ENCODE measurements at regions of chr19 and their contacts with region 1.

Region 1: DNA sequence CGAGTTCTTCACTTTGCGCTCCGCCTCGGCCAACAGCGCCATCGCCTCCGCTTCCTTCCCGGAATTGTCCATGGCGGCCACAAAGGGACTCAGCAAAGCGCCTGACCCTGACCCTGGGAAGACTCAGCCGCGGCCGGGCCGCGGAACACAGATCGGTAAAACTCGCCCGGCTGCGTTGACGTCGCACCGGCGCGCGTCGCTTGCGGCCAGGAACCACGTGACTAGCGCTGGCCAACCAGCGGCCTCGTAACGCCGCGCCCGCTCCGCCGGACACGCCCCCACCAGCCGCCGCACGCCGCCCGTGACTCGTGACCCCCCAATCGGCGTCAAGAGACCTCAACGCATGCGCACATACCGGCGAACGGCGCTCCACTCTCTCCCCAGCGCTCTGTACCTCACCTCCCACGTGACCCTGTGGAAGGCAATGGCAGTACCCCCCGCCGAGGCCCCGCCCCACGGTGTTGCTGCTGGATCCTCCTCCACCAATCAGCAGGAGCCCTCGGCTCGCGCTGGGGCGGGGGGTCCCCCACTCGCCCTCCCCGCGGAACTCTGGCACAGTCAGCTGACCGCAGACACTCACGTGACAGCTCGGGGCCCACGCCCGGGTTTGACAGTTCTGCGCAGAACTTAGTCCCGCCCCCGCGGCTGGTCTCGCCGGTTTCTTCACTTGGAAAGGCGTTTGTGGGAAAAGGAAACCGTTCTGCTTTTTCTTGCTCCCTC is at the start of gene NAPA:
- DNase-seq: peak; percentile 100
- H3K4me3 ChIP-seq: peak within 1 kb of the TSS; percentile 97 to 99 (median 98)
- H3K27ac ChIP-seq: peak within 1 kb of the TSS; percentile 98 to 100 (median 99)
- H3K4me1 ChIP-seq: peaks cover 0 to 52% (median 43%) of the 10 kb centered on the region in 4 donors
- H3K27me3 ChIP-seq: no peaks in the 10 kb centered on the region
- CTCF ChIP-seq: no peak
- EP300 ChIP-seq: peak in 3 of 4 donors; percentile 18 to 95 (median 33)
- POLR2A ChIP-seq: peak; percentile 98 to 99
- total RNA-seq, gene NAPA: 84.9 to 167 (median 91.8) TPM

Region 2: GRCh38 chr19:47483800-47484690 is 31.0 kb before region 1 on chr19 and contains the start of gene KPTN:
- intact Hi-C with region 1: loop called (anchors 2 kb)
- DNase-seq: peak; percentile 95
- H3K4me3 ChIP-seq: peak within 1 kb of the TSS; percentile 60 to 75 (median 69)
- H3K27ac ChIP-seq: peak within 1 kb of the TSS; percentile 91 to 92 (median 92)
- H3K4me1 ChIP-seq: peaks cover 3 to 28% (median 19%) of the 10 kb centered on the region in 4 donors
- H3K27me3 ChIP-seq: no peaks in the 10 kb centered on the region
- CTCF ChIP-seq: peak; percentile 88 to 95 (median 92)
- EP300 ChIP-seq: peak in 1 of 4 donors; percentile 27
- POLR2A ChIP-seq: no peak
- total RNA-seq, gene KPTN: 4.4 to 10.0 (median 4.7) TPM

Region 3: GRCh38 chr19:47600246-47601179 is 85.5 kb after region 1 on chr19:
- intact Hi-C with region 1: loop called (anchors 1 kb)
- DNase-seq: peak; percentile 100
- H3K4me3 ChIP-seq: peak overlapping the region; percentile 49 to 56 (median 52)
- H3K27ac ChIP-seq: peak overlapping the region; percentile 89 to 94 (median 92)
- H3K4me1 ChIP-seq: peaks cover 0 to 23% (median 21%) of the 10 kb centered on the region in 4 donors
- H3K27me3 ChIP-seq: no peaks in the 10 kb centered on the region
- CTCF ChIP-seq: no peak
- EP300 ChIP-seq: peak in 1 of 4 donors; percentile 83
- POLR2A ChIP-seq: peak; percentile 84 to 85

Region 4: GRCh38 chr19:47608074-47608918 is 93.3 kb after region 1 on chr19:
- intact Hi-C with region 1: loop called (anchors 2 kb)
- DNase-seq: peak; percentile 97
- H3K4me3 ChIP-seq: peak overlapping the region; percentile 70 to 98 (median 86)
- H3K27ac ChIP-seq: peak overlapping the region; percentile 95 to 98 (median 98)
- H3K4me1 ChIP-seq: peaks cover 0 to 44% (median 39%) of the 10 kb centered on the region in 4 donors
- H3K27me3 ChIP-seq: no peaks in the 10 kb centered on the region
- CTCF ChIP-seq: peak in 3 of 4 experiments; percentile 28 to 57 (median 44)
- EP300 ChIP-seq: no peak
- POLR2A ChIP-seq: peak; percentile 76 to 77

Region 5: DNA sequence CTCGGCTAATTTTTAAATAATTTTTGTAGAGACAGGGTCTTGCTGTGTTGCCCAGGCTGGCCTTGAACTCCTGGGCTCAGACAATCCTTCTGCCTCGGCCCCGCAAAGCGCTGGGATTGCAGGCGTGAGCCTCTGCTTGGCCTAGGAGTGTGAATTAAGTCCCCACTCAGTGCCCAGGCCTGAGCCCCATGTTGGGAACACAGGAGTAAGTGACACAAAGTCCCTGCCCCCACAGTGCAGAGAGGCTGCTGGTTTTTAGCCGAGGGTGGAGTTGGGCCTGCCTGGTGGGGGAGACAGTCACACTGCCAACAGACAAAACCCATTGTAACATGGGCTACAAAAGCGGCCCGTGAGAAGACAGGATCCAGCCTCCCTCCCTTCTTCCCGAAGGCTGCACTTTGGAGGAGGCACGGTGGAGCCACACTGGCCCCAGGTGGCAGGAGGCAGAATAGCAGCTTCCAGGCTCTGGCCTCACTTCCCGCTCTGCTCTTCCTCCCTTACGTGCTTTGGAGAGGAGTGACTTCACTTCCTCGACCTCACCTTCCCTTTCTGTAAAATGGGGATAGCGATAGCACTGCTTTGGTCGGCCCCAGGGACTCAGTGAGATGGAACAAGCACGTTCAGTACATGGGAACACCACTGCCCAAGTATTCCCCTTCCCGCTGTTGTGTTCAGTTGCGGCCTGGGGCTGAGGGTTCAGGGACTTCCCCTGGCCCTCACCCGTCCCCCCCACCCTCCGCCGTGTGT is 183.0 kb after region 1 on chr19:
- intact Hi-C with region 1: loop called (anchors 2 kb)
- DNase-seq: peak; percentile 94
- H3K4me3 ChIP-seq: no peak overlapping the region
- H3K27ac ChIP-seq: peak overlapping the region; percentile 63 to 83 (median 82)
- H3K4me1 ChIP-seq: peaks cover 0 to 6% (median 5%) of the 10 kb centered on the region in 4 donors
- H3K27me3 ChIP-seq: no peaks in the 10 kb centered on the region
- CTCF ChIP-seq: peak; percentile 96 to 99 (median 98)
- EP300 ChIP-seq: no peak
- POLR2A ChIP-seq: no peak

Measured in sigmoid colon (tissue), 7 donors.